Dorsolateral prefrontal cortex (tissue), 120 donors: ENCODE measurements at regions of chr22 and their contacts with region 1.

Region 1: GRCh38 chr22:35530700-35531099 is 9.9 kb upstream of the RASD2 start:
- DNase-seq: no peak
- H3K4me3 ChIP-seq: no peak overlapping the region
- H3K27ac ChIP-seq: peak overlapping the region in 17 of 59 donors; percentile 6 to 65 (median 27)
- H3K27me3 ChIP-seq: no peaks in the 10 kb centered on the region
- CTCF ChIP-seq: no peak

Region 2: DNA sequence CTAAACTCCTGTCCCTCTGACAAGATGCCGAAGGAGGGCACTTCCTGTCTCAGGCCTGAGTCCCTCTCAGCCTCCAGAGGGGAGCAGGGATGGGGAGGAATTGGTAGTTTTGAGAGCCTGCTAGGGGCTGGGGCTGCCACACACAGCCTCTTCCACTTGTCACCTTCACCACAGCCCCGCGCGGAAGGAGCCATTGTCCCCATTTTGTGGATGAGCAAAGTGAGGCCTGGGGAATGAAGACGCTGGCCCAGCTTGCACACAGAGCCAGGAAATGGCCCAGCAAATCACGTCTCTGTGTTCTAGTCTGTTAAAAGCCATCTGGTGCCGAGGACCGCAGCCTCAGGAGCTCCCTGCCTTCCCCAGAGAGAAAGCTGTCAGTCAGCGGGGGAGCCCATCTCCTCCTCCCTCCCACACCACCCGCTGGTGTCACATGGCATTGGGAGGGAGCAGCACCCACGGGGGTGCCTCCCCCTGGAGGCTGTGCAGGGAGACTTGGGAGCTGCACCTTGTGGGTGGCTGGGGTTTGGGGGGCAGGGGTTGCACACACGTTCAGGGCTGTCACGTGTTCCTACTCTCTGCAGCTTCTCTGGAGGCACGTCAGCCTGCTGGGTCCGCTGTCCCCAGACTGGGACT is 44.5 kb after region 1 on chr22:
- intact Hi-C with region 1: loop called in 1 of 2 experiments (anchors 5 kb)
- DNase-seq: no peak
- H3K4me3 ChIP-seq: no peak overlapping the region
- H3K27ac ChIP-seq: peak overlapping the region in 5 of 59 donors; percentile 16 to 60 (median 46)
- H3K27me3 ChIP-seq: no peaks in the 10 kb centered on the region
- CTCF ChIP-seq: no peak